SK-N-SH (cell line): ENCODE measurements at regions of chr10 and their contacts with region 1.

Region 1: DNA sequence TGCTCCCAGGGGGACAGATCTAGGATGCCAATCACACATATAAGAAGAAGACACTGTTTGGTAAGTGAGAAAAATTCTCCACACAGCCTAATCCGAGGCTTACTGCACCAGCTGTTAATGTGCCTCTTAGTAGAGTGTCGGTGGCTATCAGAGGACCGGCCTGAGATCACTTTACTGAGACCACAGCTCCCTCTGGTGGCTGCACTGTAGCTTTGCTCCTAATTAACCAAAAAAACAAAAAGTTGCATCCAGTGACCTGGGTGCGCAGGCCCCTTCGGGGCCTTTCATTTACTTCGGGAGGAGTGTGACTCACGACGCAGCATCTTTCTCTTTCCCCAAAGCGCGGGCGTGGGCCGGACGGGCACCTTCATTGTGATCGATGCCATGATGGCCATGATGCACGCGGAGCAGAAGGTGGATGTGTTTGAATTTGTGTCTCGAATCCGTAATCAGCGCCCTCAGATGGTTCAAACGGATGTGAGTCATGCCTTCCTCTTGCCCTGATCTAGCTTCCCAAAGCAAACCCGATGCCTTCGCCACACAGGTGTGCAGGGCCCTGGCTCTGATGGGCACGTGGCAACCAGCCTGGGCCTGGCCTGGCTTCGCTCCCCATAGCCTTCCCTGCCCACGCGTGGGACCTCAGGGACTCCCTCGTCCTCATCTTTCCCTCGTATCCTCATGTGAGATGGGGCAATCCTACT is 56.7 kb downstream of the MKI67 start:
- DNase-seq: peak; percentile 85
- H3K4me3 ChIP-seq: peak overlapping the region in 1 of 2 experiments; percentile 11; a peak in 1 of 4 replicates
- H3K27ac ChIP-seq: no peak overlapping the region
- H3K4me1 ChIP-seq: no peaks in the 10 kb centered on the region
- H3K27me3 ChIP-seq: no peaks in the 10 kb centered on the region
- CTCF ChIP-seq: peak; percentile 83
- EP300 ChIP-seq: no peak
- RAD21 ChIP-seq: peak; percentile 95

Region 2: DNA sequence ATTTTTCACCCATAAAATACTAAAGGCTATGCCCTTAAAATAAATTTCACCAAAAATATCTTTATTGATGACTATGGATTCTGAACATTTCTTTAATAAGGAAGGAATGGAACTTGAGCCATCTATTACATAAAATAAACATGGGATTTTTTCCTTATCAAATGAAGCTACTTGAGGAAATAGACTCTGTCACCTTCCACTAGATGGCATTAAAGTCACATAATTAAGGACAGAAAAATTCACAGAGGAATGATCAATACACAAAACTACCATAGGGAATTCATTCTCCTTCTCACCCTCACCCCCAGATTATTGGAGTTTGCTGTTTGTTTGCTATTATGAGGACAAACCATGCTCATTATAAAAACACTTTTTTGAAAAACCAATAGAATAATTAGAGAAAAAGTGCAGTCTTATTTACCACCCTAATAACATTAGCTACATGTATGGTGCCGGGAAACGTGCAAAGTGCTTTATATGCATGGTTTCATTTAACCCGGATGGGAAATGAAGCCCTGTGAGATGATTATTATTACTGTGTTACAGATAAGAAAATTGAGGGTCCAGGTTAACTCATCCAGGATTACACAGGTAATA is 353.6 kb before region 1 on chr10:
- CTCF ChIA-PET with region 1: interaction called, 14 read pairs
- POLR2A ChIA-PET with region 1: no interaction called
- DNase-seq: peak; percentile 32
- H3K4me3 ChIP-seq: no peak overlapping the region; a peak in 1 of 4 replicates
- H3K27ac ChIP-seq: no peak overlapping the region
- H3K4me1 ChIP-seq: no peaks in the 10 kb centered on the region
- H3K27me3 ChIP-seq: no peaks in the 10 kb centered on the region
- CTCF ChIP-seq: peak; percentile 51
- EP300 ChIP-seq: no peak
- RAD21 ChIP-seq: peak; percentile 65

Region 3: GRCh38 chr10:128018236-128018635 is 51.3 kb before region 1 on chr10:
- CTCF ChIA-PET with region 1: interaction called, 60 read pairs
- POLR2A ChIA-PET with region 1: no interaction called
- DNase-seq: no peak
- H3K4me3 ChIP-seq: no peak overlapping the region
- H3K27ac ChIP-seq: no peak overlapping the region
- H3K4me1 ChIP-seq: no peaks in the 10 kb centered on the region
- H3K27me3 ChIP-seq: no peaks in the 10 kb centered on the region
- CTCF ChIP-seq: no peak
- EP300 ChIP-seq: no peak
- RAD21 ChIP-seq: no peak

Region 4: GRCh38 chr10:128035557-128035973 is 33.9 kb before region 1 on chr10:
- CTCF ChIA-PET with region 1: interaction called, 23 read pairs
- POLR2A ChIA-PET with region 1: no interaction called
- DNase-seq: peak; percentile 70
- H3K4me3 ChIP-seq: no peak overlapping the region
- H3K27ac ChIP-seq: no peak overlapping the region
- H3K4me1 ChIP-seq: 0 out of 4 replicates have a peak, but pooled peaks cover 0 to 5% of the 10 kb centered on the region in 2 experiments
- H3K27me3 ChIP-seq: no peaks in the 10 kb centered on the region
- CTCF ChIP-seq: peak; percentile 68
- EP300 ChIP-seq: no peak
- RAD21 ChIP-seq: peak; percentile 41; the same call in 1 of the 2 replicates

Region 5: GRCh38 chr10:128047351-128047750 is 22.1 kb before region 1 on chr10:
- CTCF ChIA-PET with region 1: interaction called, 22 read pairs
- POLR2A ChIA-PET with region 1: no interaction called
- DNase-seq: no peak
- H3K4me3 ChIP-seq: no peak overlapping the region
- H3K27ac ChIP-seq: no peak overlapping the region
- H3K4me1 ChIP-seq: peaks cover 0 to 6% of the 10 kb centered on the region in 2 experiments; a peak in 1 of 4 replicates
- H3K27me3 ChIP-seq: no peaks in the 10 kb centered on the region
- CTCF ChIP-seq: no peak
- EP300 ChIP-seq: no peak
- RAD21 ChIP-seq: no peak

Region 6: DNA sequence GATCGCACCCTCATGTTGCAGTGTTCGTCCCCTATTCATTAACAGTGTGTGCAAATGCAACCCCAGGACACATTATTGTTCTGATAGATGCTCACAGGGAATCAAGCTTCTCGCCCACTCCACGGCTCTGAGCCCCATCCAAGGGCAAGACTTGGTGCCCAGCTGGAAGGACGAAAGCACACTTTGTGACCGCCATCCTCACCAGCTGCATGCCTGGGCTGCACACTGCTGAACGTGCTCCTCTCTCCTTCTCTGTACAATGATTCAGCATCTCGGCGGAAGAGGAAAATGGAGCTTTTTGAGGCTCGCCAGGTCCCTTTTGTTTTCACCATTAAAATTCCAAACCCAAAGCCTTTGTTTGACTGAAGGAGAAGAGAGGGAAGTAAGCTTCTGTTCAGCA is 14.9 kb after region 1 on chr10:
- CTCF ChIA-PET with region 1: interaction called, 17 read pairs
- POLR2A ChIA-PET with region 1: no interaction called
- DNase-seq: no peak
- H3K4me3 ChIP-seq: no peak overlapping the region
- H3K27ac ChIP-seq: no peak overlapping the region
- H3K4me1 ChIP-seq: peaks cover 0 to 12% of the 10 kb centered on the region in 2 experiments; a peak in 1 of 4 replicates
- H3K27me3 ChIP-seq: no peaks in the 10 kb centered on the region
- CTCF ChIP-seq: no peak
- EP300 ChIP-seq: no peak
- RAD21 ChIP-seq: no peak